CD8-positive, alpha-beta T cell (primary cell): ENCODE measurements at regions of chr20 and their contacts with region 1.

Region 1: GRCh38 chr20:57382027-57382503 is 9.1 kb upstream of the RBM38 start:
- DNase-seq: no peak
- ATAC-seq: no peak
- H3K4me3 ChIP-seq: no peak overlapping the region
- H3K4me3 Mint-ChIP-seq: no peak overlapping the region
- H3K27ac ChIP-seq: no peak overlapping the region
- H3K27ac Mint-ChIP-seq: peak overlapping the region; percentile 66
- H3K4me1 ChIP-seq: peaks cover 12% of the 10 kb centered on the region
- H3K4me1 Mint-ChIP-seq: peaks cover 22% of the 10 kb centered on the region
- H3K27me3 ChIP-seq: no peaks in the 10 kb centered on the region
- H3K27me3 Mint-ChIP-seq: no peaks in the 10 kb centered on the region
- CTCF ChIP-seq: no peak

Region 2: DNA sequence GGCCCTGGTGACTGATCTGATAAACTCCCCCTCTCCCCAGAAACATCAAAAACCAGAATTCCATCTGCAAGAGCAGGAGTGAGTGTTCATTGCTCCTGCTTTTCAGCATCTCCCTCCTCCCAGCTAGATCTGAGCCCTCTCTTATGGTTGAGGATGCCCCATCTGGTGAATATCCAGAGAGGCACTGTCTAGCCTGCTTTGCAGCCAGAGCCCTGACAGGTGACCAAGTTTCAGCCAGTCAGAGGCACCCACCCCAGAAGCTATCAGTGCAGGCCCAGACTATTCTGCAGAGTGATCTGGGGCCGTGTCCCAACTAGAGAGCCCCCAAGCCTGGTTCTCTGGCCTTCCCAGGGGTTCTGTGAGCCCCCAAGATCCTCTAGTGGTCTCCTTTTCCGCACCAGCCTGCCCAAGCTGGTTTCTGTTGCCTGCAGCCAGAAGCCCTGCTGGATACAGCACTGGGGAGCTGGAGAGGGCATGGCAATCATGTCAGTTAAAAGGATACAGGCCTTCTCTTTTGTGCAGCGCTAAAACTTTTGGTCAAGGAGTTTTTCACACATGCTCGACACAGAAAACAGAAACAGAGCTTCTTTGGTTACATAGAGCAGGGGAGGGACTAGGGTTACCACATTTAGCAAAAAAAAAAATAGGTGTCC is 109.1 kb before region 1 on chr20:
- CTCF ChIA-PET with region 1: no interaction called
- POLR2A ChIA-PET with region 1: no interaction called
- intact Hi-C with region 1: no loop called
- DNase-seq: no peak
- ATAC-seq: no peak
- H3K4me3 ChIP-seq: no peak overlapping the region
- H3K4me3 Mint-ChIP-seq: no peak overlapping the region
- H3K27ac ChIP-seq: no peak overlapping the region
- H3K27ac Mint-ChIP-seq: no peak overlapping the region
- H3K4me1 ChIP-seq: no peaks in the 10 kb centered on the region
- H3K4me1 Mint-ChIP-seq: no peaks in the 10 kb centered on the region
- H3K27me3 ChIP-seq: peaks cover 0 to 5% of the 10 kb centered on the region in 2 experiments
- H3K27me3 Mint-ChIP-seq: peaks cover 36% of the 10 kb centered on the region
- CTCF ChIP-seq: no peak

Region 3: GRCh38 chr20:57425150-57426013 is 43.3 kb after region 1 on chr20:
- CTCF ChIA-PET with region 1: interaction called, 11 read pairs
- POLR2A ChIA-PET with region 1: no interaction called
- intact Hi-C with region 1: no loop called
- DNase-seq: no peak
- ATAC-seq: no peak
- H3K4me3 ChIP-seq: no peak overlapping the region
- H3K4me3 Mint-ChIP-seq: peak overlapping the region; percentile 35
- H3K27ac ChIP-seq: no peak overlapping the region
- H3K27ac Mint-ChIP-seq: peak overlapping the region; percentile 67
- H3K4me1 ChIP-seq: peaks cover 24% of the 10 kb centered on the region
- H3K4me1 Mint-ChIP-seq: peaks cover 41% of the 10 kb centered on the region
- H3K27me3 ChIP-seq: no peaks in the 10 kb centered on the region
- H3K27me3 Mint-ChIP-seq: no peaks in the 10 kb centered on the region
- CTCF ChIP-seq: no peak

Region 4: DNA sequence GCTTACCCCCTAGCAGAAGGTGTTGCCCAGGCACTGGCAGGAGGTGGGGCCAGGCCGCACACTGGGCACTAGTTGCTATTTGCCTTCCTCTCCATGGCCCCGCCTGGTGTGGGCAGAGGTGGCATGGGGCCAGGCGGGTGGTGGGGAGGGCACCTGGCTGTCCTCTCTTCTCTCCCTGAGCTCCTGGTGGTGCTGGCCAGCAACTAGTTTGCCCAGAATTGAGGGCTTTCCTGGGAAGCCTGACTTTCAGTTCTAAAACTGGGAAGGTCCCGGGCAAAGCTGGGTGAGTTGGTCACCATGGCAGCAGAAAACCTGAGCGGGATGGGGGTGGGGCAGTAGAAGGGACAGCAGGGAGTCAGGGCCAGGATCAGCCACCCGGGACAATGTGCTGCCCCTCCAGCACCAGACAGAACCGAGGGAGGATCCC is 57.4 kb after region 1 on chr20:
- CTCF ChIA-PET with region 1: interaction called, 58 read pairs
- POLR2A ChIA-PET with region 1: no interaction called
- intact Hi-C with region 1: loop called (anchors 1 to 2 kb)
- DNase-seq: no peak
- ATAC-seq: no peak
- H3K4me3 ChIP-seq: no peak overlapping the region
- H3K4me3 Mint-ChIP-seq: no peak overlapping the region
- H3K27ac ChIP-seq: no peak overlapping the region
- H3K27ac Mint-ChIP-seq: no peak overlapping the region
- H3K4me1 ChIP-seq: peaks cover 18% of the 10 kb centered on the region
- H3K4me1 Mint-ChIP-seq: peaks cover 21% of the 10 kb centered on the region
- H3K27me3 ChIP-seq: no peaks in the 10 kb centered on the region
- H3K27me3 Mint-ChIP-seq: no peaks in the 10 kb centered on the region
- CTCF ChIP-seq: no peak

Region 5: GRCh38 chr20:57493091-57493615 is 111.1 kb after region 1 on chr20:
- CTCF ChIA-PET with region 1: interaction called, 30 read pairs
- POLR2A ChIA-PET with region 1: interaction called, 3 read pairs
- intact Hi-C with region 1: loop called (anchors 1 kb)
- DNase-seq: no peak
- ATAC-seq: no peak
- H3K4me3 ChIP-seq: no peak overlapping the region
- H3K4me3 Mint-ChIP-seq: no peak overlapping the region
- H3K27ac ChIP-seq: no peak overlapping the region
- H3K27ac Mint-ChIP-seq: no peak overlapping the region
- H3K4me1 ChIP-seq: no peaks in the 10 kb centered on the region
- H3K4me1 Mint-ChIP-seq: peaks cover 6% of the 10 kb centered on the region
- H3K27me3 ChIP-seq: peaks cover 0 to 4% of the 10 kb centered on the region in 2 experiments
- H3K27me3 Mint-ChIP-seq: peaks cover 6% of the 10 kb centered on the region
- CTCF ChIP-seq: no peak